Transverse colon (tissue), 4 donors: ENCODE measurements at regions of chr2 and their contacts with region 1.

Region 1: GRCh38 chr2:102806250-102806837 is 44.5 kb downstream of the TMEM182 start:
- DNase-seq: peak; percentile 69
- H3K4me3 ChIP-seq: no peak overlapping the region
- H3K27ac ChIP-seq: no peak overlapping the region
- H3K4me1 ChIP-seq: peaks cover 0 to 7% (median 0%) of the 10 kb centered on the region in 4 donors
- H3K27me3 ChIP-seq: no peaks in the 10 kb centered on the region
- CTCF ChIP-seq: peak; percentile 60 to 77 (median 71)
- EP300 ChIP-seq: no peak
- POLR2A ChIP-seq: no peak

Region 2: GRCh38 chr2:100957996-100958653 is 1848.2 kb before region 1 on chr2:
- in situ Hi-C with region 1: no loop called
- intact Hi-C with region 1: no loop called
- DNase-seq: no peak
- H3K4me3 ChIP-seq: no peak overlapping the region
- H3K27ac ChIP-seq: peak overlapping the region in 1 of 4 donors; percentile 8
- H3K4me1 ChIP-seq: peaks cover 0 to 4% (median 2%) of the 10 kb centered on the region in 4 donors
- H3K27me3 ChIP-seq: no peaks in the 10 kb centered on the region
- CTCF ChIP-seq: no peak
- EP300 ChIP-seq: no peak
- POLR2A ChIP-seq: no peak

Region 3: GRCh38 chr2:102753563-102754159 is 52.7 kb before region 1 on chr2:
- in situ Hi-C with region 1: loop called in 2 of 4 experiments (anchors 10 kb)
- intact Hi-C with region 1: loop called (anchors 1 kb)
- DNase-seq: peak; percentile 13
- H3K4me3 ChIP-seq: no peak overlapping the region
- H3K27ac ChIP-seq: no peak overlapping the region
- H3K4me1 ChIP-seq: no peaks in the 10 kb centered on the region
- H3K27me3 ChIP-seq: no peaks in the 10 kb centered on the region
- CTCF ChIP-seq: peak; percentile 65 to 86 (median 79)
- EP300 ChIP-seq: no peak
- POLR2A ChIP-seq: no peak